ENCODE measurements at regions of chr2 and their contacts with region 1.

Region 1: DNA sequence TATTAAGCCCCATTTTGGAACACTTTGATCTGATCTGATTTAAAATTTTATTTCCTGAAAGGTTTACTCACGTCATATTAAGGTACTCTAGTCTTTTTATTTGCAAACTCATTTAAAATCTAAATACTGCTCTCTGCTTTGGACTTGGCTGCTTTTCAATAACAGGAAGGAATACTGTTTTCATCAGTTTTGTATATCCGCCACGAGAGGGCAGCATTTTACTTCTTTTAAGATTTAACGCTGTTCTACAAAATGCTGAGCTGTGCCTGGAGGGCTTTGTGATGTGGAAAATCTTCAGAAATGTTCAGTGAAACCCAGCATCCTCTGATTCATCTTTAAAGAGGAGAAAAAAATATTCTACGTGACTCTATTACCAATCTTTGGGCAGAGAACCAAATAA is 37.5 kb upstream of the SLC38A11 start:
- DNase-seq: peak in 4 of 10 donors; percentile 32 to 60 (median 48)
- H3K4me3 ChIP-seq: no peak overlapping the region
- H3K27ac ChIP-seq: peak overlapping the region in 1 of 59 donors; percentile 5
- H3K27me3 ChIP-seq: no peaks in the 10 kb centered on the region
- CTCF ChIP-seq: peak; percentile 56 to 84 (median 70)

Region 2: DNA sequence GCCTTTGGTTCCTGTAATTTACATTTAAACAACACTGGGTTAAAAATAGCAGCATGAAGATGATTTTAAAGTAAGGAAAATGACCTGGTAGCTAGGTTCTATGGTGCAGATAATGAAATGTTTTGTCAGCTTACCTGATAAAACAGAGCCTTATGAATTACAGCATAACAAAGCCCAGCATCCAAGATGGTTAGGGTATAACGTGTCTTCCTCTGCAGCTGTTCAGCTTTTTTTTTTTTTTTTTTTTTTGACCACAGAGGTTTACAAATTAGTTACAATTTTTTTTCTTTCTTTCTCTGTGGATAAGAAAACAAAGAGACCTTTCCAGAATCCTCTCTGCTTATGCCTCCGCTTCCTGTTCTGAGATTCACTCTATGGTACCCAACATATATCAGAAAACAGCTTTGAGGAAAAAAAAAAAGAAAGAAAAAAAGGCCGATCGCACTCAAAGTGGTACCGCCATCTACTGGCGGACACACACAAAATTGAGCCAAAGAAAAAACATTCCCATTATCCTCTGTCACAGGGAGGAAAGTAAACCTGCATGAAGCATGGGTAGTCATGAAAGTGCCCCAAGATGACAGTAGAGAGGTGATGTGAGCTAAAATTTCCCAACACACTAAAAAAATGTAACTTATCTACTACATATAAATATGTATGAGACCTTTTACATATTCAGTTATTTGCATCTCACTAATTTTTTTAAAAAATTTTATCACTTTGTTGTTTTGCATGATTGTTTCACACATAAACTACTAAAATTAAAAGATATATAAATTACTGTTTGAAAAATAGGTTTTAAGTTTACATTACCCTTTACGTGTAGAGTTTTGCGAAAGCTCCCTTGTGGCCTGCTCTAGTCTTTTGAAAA is 211.1 kb after region 1 on chr2 and contains the start of gene SCN3A:
- intact Hi-C with region 1: loop called in 1 of 2 experiments (anchors 5 kb)
- DNase-seq: peak in 3 of 10 donors; percentile 36 to 41 (median 41)
- H3K4me3 ChIP-seq: peak within 1 kb of the TSS; percentile 13 to 71 (median 53)
- H3K27ac ChIP-seq: peak within 1 kb of the TSS in 13 of 59 donors; percentile 7 to 68 (median 29)
- H3K27me3 ChIP-seq: no peaks in the 10 kb centered on the region
- CTCF ChIP-seq: peak; percentile 67 to 95 (median 82)
- total RNA-seq, gene SCN3A: 13.0 to 56.5 (median 38.6) TPM

Measured in dorsolateral prefrontal cortex (tissue), 120 donors.